Activated CD4-positive, alpha-beta memory T cell treated with anti-CD3 and anti-CD28 coated beads for 36 hours (primary cell): ENCODE measurements at regions of chr4 and their contacts with region 1.

Region 1: DNA sequence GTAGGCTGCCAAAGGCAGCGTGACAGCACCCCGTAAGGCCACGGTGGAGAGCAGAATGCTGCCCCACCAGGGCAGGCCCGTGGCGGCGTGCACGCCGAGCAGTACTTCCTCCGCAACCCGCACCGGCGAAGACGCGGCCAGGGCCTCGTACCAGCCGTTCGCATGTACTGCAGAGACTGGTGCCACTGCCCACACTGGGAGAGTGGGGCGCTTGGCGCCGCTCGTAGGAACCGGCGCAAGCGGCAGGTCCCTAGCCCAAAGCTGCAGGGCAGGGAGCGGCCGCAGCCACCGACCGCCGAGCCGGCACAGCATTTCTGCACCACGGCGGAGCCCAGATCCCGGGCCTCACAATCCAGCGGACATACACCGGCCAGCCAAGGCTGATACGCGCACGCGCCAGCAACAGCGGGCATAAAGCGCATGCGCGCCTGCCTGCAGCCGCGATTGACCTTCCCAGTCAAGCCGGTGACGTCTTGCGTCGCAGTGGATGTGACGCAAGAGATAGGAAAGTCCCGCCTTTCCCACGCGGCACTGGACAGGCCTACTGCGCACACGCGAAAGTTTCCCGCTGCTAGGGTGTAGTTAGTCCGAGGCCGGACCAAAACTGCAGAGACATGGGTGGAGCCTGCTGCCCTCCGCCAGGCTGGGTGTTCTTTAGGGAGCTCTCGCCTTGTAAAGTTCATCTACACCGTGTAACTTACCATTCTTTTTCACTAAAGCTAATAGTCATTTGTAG is at the start of gene COX18:
- DNase-seq: peak; percentile 97
- H3K4me3 Mint-ChIP-seq: peak within 1 kb of the TSS; percentile 83
- H3K27ac Mint-ChIP-seq: peak within 1 kb of the TSS; percentile 99
- H3K4me1 Mint-ChIP-seq: peaks cover 29% of the 10 kb centered on the region
- H3K27me3 Mint-ChIP-seq: no peaks in the 10 kb centered on the region
- total RNA-seq, gene COX18: 18.6 to 20.6 TPM

Region 2: GRCh38 chr4:72112514-72113156 is 956.9 kb before region 1 on chr4:
- CTCF ChIA-PET with region 1: no interaction called
- POLR2A ChIA-PET with region 1: no interaction called
- intact Hi-C with region 1: loop called (anchors 5 kb)
- DNase-seq: peak; percentile 24
- H3K4me3 Mint-ChIP-seq: no peak overlapping the region
- H3K27ac Mint-ChIP-seq: no peak overlapping the region
- H3K4me1 Mint-ChIP-seq: peaks cover 5% of the 10 kb centered on the region
- H3K27me3 Mint-ChIP-seq: no peaks in the 10 kb centered on the region

Region 3: GRCh38 chr4:73036123-73036522 is 33.4 kb before region 1 on chr4:
- CTCF ChIA-PET with region 1: interaction called, 10 read pairs
- POLR2A ChIA-PET with region 1: no interaction called
- intact Hi-C with region 1: loop called (anchors 2 kb)
- DNase-seq: no peak
- H3K4me3 Mint-ChIP-seq: no peak overlapping the region
- H3K27ac Mint-ChIP-seq: no peak overlapping the region
- H3K4me1 Mint-ChIP-seq: peaks cover 14% of the 10 kb centered on the region
- H3K27me3 Mint-ChIP-seq: peaks cover 4% of the 10 kb centered on the region

Region 4: GRCh38 chr4:73086095-73086868 is 16.8 kb after region 1 on chr4:
- CTCF ChIA-PET with region 1: interaction called, 4 read pairs
- POLR2A ChIA-PET with region 1: interaction called, 3 read pairs
- intact Hi-C with region 1: loop called (anchors 2 kb)
- DNase-seq: no peak
- H3K4me3 Mint-ChIP-seq: no peak overlapping the region
- H3K27ac Mint-ChIP-seq: no peak overlapping the region
- H3K4me1 Mint-ChIP-seq: peaks cover 15% of the 10 kb centered on the region
- H3K27me3 Mint-ChIP-seq: no peaks in the 10 kb centered on the region

Region 5: GRCh38 chr4:73152893-73153292 is 83.4 kb after region 1 on chr4:
- CTCF ChIA-PET with region 1: no interaction called
- POLR2A ChIA-PET with region 1: no interaction called
- intact Hi-C with region 1: no loop called
- DNase-seq: no peak
- H3K4me3 Mint-ChIP-seq: no peak overlapping the region
- H3K27ac Mint-ChIP-seq: no peak overlapping the region
- H3K4me1 Mint-ChIP-seq: peaks cover 7% of the 10 kb centered on the region
- H3K27me3 Mint-ChIP-seq: no peaks in the 10 kb centered on the region

Region 6: GRCh38 chr4:73222466-73223257 is 153.2 kb after region 1 on chr4:
- CTCF ChIA-PET with region 1: no interaction called
- POLR2A ChIA-PET with region 1: interaction called, 3 read pairs
- intact Hi-C with region 1: loop called (anchors 1 kb)
- DNase-seq: peak; percentile 57
- H3K4me3 Mint-ChIP-seq: no peak overlapping the region
- H3K27ac Mint-ChIP-seq: no peak overlapping the region
- H3K4me1 Mint-ChIP-seq: peaks cover 30% of the 10 kb centered on the region
- H3K27me3 Mint-ChIP-seq: no peaks in the 10 kb centered on the region

Region 7: DNA sequence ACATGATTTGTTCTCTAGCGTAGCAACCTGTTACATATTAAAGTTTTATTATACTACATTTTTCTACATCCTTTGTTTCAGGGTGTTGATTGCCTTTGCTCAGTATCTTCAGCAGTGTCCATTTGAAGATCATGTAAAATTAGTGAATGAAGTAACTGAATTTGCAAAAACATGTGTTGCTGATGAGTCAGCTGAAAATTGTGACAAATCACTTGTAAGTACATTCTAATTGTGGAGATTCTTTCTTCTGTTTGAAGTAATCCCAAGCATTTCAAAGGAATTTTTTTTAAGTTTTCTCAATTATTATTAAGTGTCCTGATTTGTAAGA is 337.0 kb after region 1 on chr4:
- CTCF ChIA-PET with region 1: no interaction called
- POLR2A ChIA-PET with region 1: no interaction called
- intact Hi-C with region 1: no loop called
- DNase-seq: no peak
- H3K4me3 Mint-ChIP-seq: no peak overlapping the region
- H3K27ac Mint-ChIP-seq: no peak overlapping the region
- H3K4me1 Mint-ChIP-seq: no peaks in the 10 kb centered on the region
- H3K27me3 Mint-ChIP-seq: no peaks in the 10 kb centered on the region

Region 8: GRCh38 chr4:74157561-74158465 is 1088.3 kb after region 1 on chr4 and contains the start of gene MTHFD2L:
- CTCF ChIA-PET with region 1: no interaction called
- POLR2A ChIA-PET with region 1: no interaction called
- intact Hi-C with region 1: loop called (anchors 5 kb)
- DNase-seq: peak; percentile 87
- H3K4me3 Mint-ChIP-seq: peak within 1 kb of the TSS; percentile 88
- H3K27ac Mint-ChIP-seq: peak within 1 kb of the TSS; percentile 74
- H3K4me1 Mint-ChIP-seq: peaks cover 17% of the 10 kb centered on the region
- H3K27me3 Mint-ChIP-seq: peaks cover 2% of the 10 kb centered on the region
- total RNA-seq, gene MTHFD2L: 5.4 to 6.5 TPM